ENCODE measurements at regions of chr3 and their contacts with region 1.

Region 1: GRCh38 chr3:152471814-152472671 is 203.3 kb downstream of the MBNL1 start:
- DNase-seq: peak; percentile 49 to 72 (median 57)
- H3K4me3 ChIP-seq: peak overlapping the region; percentile 47
- H3K4me3 Mint-ChIP-seq: peak overlapping the region; percentile 50 to 76 (median 62)
- H3K27ac ChIP-seq: no peak overlapping the region
- H3K27ac Mint-ChIP-seq: peak overlapping the region in 7 of 8 donors; percentile 49 to 90 (median 80)
- H3K4me1 ChIP-seq: peaks cover 11% of the 10 kb centered on the region
- H3K4me1 Mint-ChIP-seq: peaks cover 11 to 30% (median 18%) of the 10 kb centered on the region in 3 donors
- H3K27me3 ChIP-seq: no peaks in the 10 kb centered on the region
- H3K27me3 Mint-ChIP-seq: peaks cover 0 to 2% of the 10 kb centered on the region in 2 donors

Region 2: DNA sequence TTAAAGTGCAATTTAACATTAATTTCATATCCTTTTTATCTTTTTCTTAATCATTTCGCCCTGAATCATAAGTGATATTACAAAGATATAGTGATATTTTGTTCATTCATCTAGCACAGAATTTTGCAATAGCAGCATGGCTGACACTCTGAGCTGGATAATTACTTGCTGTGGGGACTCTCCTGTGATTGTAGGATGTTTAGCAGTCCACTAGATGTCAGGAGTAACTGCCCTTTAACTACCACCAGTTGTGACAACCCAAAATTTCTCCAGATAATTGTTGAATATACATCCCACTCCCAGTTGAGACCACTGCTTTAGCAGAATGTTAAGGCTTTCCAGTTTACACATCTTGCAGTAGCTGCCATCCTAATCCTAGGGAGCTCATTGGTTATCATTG is 400.1 kb before region 1 on chr3:
- CTCF ChIA-PET with region 1: interaction called, 13 read pairs
- POLR2A ChIA-PET with region 1: no interaction called
- DNase-seq: peak in 2 of 5 donors; percentile 11 to 24
- H3K4me3 ChIP-seq: no peak overlapping the region
- H3K4me3 Mint-ChIP-seq: peak overlapping the region in 1 of 7 donors; percentile 11
- H3K27ac ChIP-seq: no peak overlapping the region
- H3K27ac Mint-ChIP-seq: no peak overlapping the region
- H3K4me1 ChIP-seq: no peaks in the 10 kb centered on the region
- H3K4me1 Mint-ChIP-seq: peaks cover 0 to 5% (median 0%) of the 10 kb centered on the region in 3 donors
- H3K27me3 ChIP-seq: no peaks in the 10 kb centered on the region
- H3K27me3 Mint-ChIP-seq: peaks cover 0 to 3% of the 10 kb centered on the region in 2 donors

Region 3: DNA sequence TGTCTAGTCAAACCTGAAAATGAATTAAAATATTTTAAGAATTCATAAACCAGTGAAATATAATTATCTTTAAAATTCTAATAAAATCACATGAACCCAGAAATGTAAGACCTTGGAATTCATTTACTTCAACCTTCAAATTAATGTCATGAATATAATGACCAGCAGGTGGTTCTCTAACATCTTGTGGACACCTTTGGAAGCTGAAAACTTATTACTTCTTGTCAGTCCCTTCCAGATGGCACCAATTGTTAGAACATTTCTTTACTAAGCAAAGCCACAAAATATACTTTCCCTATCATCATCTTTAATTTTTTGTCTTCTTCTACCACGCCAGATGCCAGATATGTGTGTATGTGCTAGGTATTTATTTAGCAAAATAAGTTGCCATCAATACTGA is 36.7 kb after region 1 on chr3:
- CTCF ChIA-PET with region 1: no interaction called
- POLR2A ChIA-PET with region 1: no interaction called
- DNase-seq: no peak
- H3K4me3 ChIP-seq: no peak overlapping the region
- H3K4me3 Mint-ChIP-seq: no peak overlapping the region
- H3K27ac ChIP-seq: no peak overlapping the region
- H3K27ac Mint-ChIP-seq: no peak overlapping the region
- H3K4me1 ChIP-seq: no peaks in the 10 kb centered on the region
- H3K4me1 Mint-ChIP-seq: no peaks in the 10 kb centered on the region
- H3K27me3 ChIP-seq: no peaks in the 10 kb centered on the region
- H3K27me3 Mint-ChIP-seq: peaks cover 10 to 15% of the 10 kb centered on the region in 2 donors